Right cardiac atrium (tissue), 5 donors: ENCODE measurements at regions of chr3 and their contacts with region 1.

Region 1: DNA sequence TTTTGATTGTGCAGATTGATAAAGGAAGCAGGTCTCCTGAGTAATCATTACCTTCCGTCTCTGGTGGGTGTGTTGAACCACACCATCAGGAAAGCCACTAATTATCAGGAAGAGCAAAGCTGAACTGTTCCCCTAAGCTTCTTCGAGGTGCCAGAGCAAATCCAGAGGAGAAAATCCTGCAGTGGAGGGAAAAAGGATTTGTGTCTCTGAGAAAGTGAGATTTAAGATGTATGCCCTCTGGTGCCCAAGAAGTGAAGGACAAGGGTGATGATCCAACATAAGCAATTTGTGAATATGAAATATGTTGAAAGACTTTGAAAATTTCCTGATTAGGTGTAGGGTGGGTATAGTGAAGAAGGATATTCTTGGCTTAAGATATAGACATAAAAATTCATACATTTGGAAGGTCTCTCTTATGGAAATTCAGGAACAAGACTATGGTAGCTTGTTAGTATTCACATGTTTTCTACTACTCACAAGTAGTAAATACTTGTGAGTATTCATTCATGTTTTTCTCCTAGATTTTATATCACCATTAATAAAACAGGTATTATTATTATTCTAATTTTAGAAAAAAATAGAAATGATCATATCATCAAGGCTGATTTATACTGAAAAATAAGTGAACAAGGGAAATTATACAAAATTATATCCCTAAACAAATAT is 34.8 kb downstream of the COMMD2 start:
- DNase-seq: no peak
- ATAC-seq: peak; percentile 48 to 81
- H3K4me3 ChIP-seq: no peak overlapping the region
- H3K27ac ChIP-seq: no peak overlapping the region
- H3K4me1 ChIP-seq: no peaks in the 10 kb centered on the region
- H3K27me3 ChIP-seq: no peaks in the 10 kb centered on the region

Region 2: DNA sequence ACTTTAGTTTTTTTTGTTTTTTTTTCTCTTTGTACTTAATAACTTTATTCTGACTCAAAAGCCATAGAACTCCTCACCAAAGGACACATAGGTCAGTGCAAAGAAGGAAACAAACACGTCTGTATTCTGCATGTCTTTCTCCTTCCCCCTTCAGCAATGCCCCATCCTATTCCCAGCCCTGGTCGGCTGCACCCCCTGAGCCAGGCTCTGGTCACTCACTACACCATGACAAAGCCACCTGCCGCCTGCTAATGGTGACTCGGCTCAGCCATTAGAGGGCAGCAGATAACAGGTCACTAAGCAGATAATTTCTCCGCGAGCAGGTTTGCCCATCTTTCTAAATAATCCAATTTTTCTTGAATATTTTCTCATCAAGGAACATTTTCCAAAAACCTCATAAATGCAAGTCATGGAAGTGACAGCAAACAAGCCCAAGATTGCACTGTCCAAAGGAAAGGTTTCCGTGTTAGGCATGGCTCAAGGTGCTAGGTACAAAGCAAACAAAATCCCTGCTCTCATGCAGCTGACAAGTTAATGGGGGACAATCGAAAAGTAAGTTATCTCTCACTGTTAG is 205.2 kb before region 1 on chr3:
- intact Hi-C with region 1: loop called (anchors 5 kb)
- DNase-seq: peak; percentile 52 to 82 (median 75)
- ATAC-seq: peak; percentile 70 to 73
- H3K4me3 ChIP-seq: no peak overlapping the region
- H3K27ac ChIP-seq: no peak overlapping the region
- H3K4me1 ChIP-seq: peaks cover 4% of the 10 kb centered on the region
- H3K27me3 ChIP-seq: no peaks in the 10 kb centered on the region

Region 3: GRCh38 chr3:149536429-149536828 is 181.1 kb before region 1 on chr3:
- intact Hi-C with region 1: loop called in 1 of 4 experiments (anchors 5 kb)
- DNase-seq: peak; percentile 66 to 88 (median 87)
- ATAC-seq: peak; percentile 78 to 82
- H3K4me3 ChIP-seq: no peak overlapping the region
- H3K27ac ChIP-seq: no peak overlapping the region
- H3K4me1 ChIP-seq: peaks cover 17% of the 10 kb centered on the region
- H3K27me3 ChIP-seq: no peaks in the 10 kb centered on the region

Region 4: GRCh38 chr3:149566292-149566975 is 151.1 kb before region 1 on chr3:
- intact Hi-C with region 1: loop called in 1 of 4 experiments (anchors 5 kb)
- DNase-seq: no peak
- ATAC-seq: no peak
- H3K4me3 ChIP-seq: no peak overlapping the region
- H3K27ac ChIP-seq: no peak overlapping the region
- H3K4me1 ChIP-seq: peaks cover 4% of the 10 kb centered on the region
- H3K27me3 ChIP-seq: no peaks in the 10 kb centered on the region

Region 5: DNA sequence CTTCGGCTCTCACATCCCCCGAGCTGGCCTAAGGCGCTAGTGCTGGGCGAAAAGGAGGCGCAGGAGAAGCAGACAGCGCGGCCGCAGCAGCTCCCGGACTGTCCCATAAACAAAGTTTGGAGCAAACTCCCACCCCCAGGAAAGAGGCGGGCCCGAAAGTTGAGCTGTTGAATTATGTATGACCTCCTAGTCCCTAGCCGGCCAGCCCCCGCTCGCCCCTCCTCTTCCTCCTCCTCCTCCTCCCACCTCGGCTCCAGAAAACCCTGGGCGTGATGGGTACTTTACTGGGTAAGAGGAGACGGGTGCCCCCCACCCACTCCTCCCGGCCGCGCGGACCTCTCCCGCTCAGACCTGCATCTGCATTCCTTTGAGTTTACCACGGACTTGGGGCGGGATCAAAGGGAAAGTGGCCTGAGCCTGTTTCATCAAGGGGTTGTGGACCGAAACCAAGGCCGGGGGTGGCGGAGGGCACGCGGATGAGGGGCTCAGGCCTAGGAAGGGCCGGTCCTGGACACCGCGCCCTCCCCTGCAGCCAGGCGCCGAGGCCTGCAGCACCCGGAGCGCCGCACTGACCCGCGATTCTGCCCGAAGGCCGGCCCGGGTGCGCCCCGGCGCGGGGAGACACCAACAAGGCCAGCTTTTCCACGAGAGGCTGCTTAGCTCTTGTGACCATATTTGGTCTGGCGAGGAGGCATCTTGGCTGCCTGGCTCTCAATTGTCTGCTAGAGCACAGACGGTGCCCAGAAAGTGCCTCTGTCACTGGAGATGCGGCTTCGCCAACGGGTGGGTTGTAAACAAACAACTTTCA is 59.4 kb before region 1 on chr3 and contains the start of gene WWTR1:
- intact Hi-C with region 1: loop called in 1 of 4 experiments (anchors 10 kb)
- DNase-seq: peak; percentile 95 to 97 (median 95)
- ATAC-seq: peak; percentile 93 to 95
- H3K4me3 ChIP-seq: peak within 1 kb of the TSS; percentile 48
- H3K27ac ChIP-seq: peak within 1 kb of the TSS; percentile 84
- H3K4me1 ChIP-seq: no peaks in the 10 kb centered on the region
- H3K27me3 ChIP-seq: no peaks in the 10 kb centered on the region
- total RNA-seq, gene WWTR1: 48.2 to 99.2 (median 56.9) TPM